ENCODE measurements at regions of chr11 and their contacts with region 1.

Region 1: GRCh38 chr11:35214792-35215193 is 75.8 kb downstream of the CD44 start:
- DNase-seq: no peak
- ATAC-seq: peak; percentile 71
- H3K4me3 ChIP-seq: no peak overlapping the region
- H3K4me3 Mint-ChIP-seq: peak overlapping the region in 7 of 10 donors; percentile 12 to 68 (median 44)
- H3K27ac ChIP-seq: peak overlapping the region; percentile 11
- H3K27ac Mint-ChIP-seq: peak overlapping the region; percentile 26 to 98 (median 92)
- H3K4me1 ChIP-seq: peaks cover 40 to 41% of the 10 kb centered on the region in 2 donors
- H3K4me1 Mint-ChIP-seq: peaks cover 41 to 97% (median 89%) of the 10 kb centered on the region in 7 donors
- H3K27me3 ChIP-seq: no peaks in the 10 kb centered on the region
- H3K27me3 Mint-ChIP-seq: no peaks in the 10 kb centered on the region

Region 2: DNA sequence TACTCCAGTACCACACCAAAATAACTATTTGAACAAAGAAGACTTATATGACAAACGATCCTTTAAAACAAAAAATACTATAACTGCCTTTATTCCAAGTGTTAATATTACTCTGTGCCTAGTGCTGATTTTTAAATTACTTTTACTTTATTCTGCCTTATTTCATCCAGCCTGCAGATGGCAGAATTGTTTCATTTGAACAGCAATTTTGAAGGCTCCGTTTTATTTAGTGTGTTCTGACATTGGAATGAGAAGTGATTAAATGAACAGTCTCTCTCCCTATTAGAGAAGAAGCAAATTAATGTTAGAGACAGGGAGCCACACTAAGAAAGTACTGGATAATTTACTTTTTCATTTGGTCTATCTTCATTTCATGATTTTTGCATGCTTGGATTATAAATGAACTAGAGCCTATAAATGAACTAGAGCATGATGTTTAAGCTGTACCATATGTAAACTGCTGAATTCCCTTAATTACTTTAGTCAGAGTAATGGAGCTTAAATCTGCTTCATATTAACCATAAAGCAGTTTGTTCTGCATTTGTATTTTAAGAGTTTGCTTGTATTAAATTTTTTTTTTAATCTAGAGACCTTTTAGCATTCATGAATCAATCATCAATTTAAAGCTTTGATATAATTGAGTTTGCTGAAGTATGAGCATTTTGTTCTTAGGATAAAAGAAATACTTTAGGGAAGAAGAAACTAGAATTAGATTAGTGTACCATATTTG is 288.5 kb before region 1 on chr11:
- CTCF ChIA-PET with region 1: no interaction called
- POLR2A ChIA-PET with region 1: no interaction called
- intact Hi-C with region 1: loop called in 1 of 2 experiments (anchors 5 kb)
- DNase-seq: peak in 7 of 9 donors; percentile 18 to 61 (median 58)
- ATAC-seq: peak; percentile 80
- H3K4me3 ChIP-seq: no peak overlapping the region
- H3K4me3 Mint-ChIP-seq: no peak overlapping the region
- H3K27ac ChIP-seq: no peak overlapping the region
- H3K27ac Mint-ChIP-seq: peak overlapping the region in 1 of 9 donors; percentile 49
- H3K4me1 ChIP-seq: peaks cover 0 to 10% of the 10 kb centered on the region in 2 donors
- H3K4me1 Mint-ChIP-seq: peaks cover 10 to 54% (median 29%) of the 10 kb centered on the region in 7 donors
- H3K27me3 ChIP-seq: no peaks in the 10 kb centered on the region
- H3K27me3 Mint-ChIP-seq: no peaks in the 10 kb centered on the region

Region 3: DNA sequence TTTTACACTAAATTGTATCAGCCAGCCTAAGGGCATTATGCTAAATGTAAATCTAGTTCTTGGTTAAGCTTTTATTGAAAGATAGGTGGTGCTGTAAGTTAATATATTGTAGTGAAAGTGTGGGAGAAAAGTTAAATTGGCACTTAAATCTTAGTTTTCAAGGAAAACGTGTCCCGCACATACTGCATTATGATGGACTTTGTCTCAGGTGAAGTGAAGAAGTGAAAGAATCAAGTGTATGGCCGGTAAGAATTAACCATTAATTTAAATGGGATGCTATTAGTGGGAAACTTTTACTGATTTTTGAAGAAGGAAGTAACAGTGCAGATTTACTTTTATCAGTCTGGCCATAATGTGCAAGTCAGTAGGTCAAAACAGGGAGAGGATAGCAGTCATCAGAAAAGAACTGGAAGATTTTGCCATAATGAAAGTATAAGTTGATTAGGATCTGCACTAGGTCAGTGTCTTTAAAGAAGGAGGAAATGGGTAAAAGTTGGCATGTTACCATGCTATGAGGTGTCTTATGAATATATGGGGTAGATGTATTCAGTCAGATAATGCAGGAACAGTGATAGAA is 216.8 kb before region 1 on chr11:
- CTCF ChIA-PET with region 1: no interaction called
- POLR2A ChIA-PET with region 1: interaction called, 3 read pairs
- intact Hi-C with region 1: loop called in 1 of 2 experiments (anchors 1 kb)
- DNase-seq: peak in 6 of 9 donors; percentile 27 to 54 (median 44)
- ATAC-seq: peak; percentile 72
- H3K4me3 ChIP-seq: no peak overlapping the region
- H3K4me3 Mint-ChIP-seq: peak overlapping the region in 9 of 10 donors; percentile 6 to 81 (median 34)
- H3K27ac ChIP-seq: peak overlapping the region; percentile 8
- H3K27ac Mint-ChIP-seq: peak overlapping the region; percentile 15 to 90 (median 69)
- H3K4me1 ChIP-seq: peaks cover 15 to 19% of the 10 kb centered on the region in 2 donors
- H3K4me1 Mint-ChIP-seq: peaks cover 19 to 38% (median 35%) of the 10 kb centered on the region in 7 donors
- H3K27me3 ChIP-seq: no peaks in the 10 kb centered on the region
- H3K27me3 Mint-ChIP-seq: no peaks in the 10 kb centered on the region

Region 4: DNA sequence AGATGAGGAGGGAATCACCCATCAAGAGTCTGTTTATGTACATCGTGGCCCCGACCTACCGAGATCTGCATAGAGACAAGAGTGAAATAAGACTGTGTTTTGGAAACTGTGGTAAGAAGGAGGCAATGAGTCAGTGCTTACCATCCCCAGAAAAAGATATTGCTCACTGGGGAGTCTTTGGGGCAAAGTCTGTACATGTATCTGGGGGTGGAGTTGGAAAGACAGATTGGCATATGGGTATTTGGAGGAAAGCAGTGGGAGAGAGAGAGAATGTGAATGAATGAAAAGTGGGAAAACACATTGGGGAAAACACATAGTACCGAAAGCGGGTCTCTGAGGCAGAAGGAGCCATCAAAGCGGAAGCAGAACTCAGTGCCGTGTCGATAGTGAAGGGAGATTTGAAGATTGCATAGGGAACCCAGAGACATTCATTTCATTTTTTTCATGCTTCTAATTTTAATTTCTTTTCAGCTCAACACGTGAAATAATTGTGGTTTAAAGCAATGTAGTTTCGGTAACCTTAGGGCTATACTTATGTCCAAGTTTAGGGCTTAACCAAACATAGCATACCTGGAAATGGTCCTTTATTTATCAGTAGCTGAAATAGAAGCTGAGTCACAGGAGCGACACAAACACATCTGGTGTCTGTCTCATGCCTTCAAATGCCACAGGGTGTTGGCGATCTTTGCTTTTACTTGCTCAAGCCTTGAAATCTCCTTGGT is 174.4 kb before region 1 on chr11:
- CTCF ChIA-PET with region 1: no interaction called
- POLR2A ChIA-PET with region 1: no interaction called
- intact Hi-C with region 1: loop called in 1 of 2 experiments (anchors 1 kb)
- DNase-seq: peak in 8 of 9 donors; percentile 53 to 89 (median 74)
- ATAC-seq: peak; percentile 88
- H3K4me3 ChIP-seq: peak overlapping the region; percentile 60
- H3K4me3 Mint-ChIP-seq: peak overlapping the region; percentile 74 to 94 (median 89)
- H3K27ac ChIP-seq: peak overlapping the region; percentile 86
- H3K27ac Mint-ChIP-seq: peak overlapping the region; percentile 90 to 99 (median 97)
- H3K4me1 ChIP-seq: peaks cover 29 to 45% of the 10 kb centered on the region in 2 donors
- H3K4me1 Mint-ChIP-seq: peaks cover 28 to 77% (median 68%) of the 10 kb centered on the region in 7 donors
- H3K27me3 ChIP-seq: no peaks in the 10 kb centered on the region
- H3K27me3 Mint-ChIP-seq: peaks cover 0 to 29% (median 0%) of the 10 kb centered on the region in 5 donors

Region 5: GRCh38 chr11:35144136-35144741 is 70.6 kb before region 1 on chr11:
- CTCF ChIA-PET with region 1: interaction called, 4 read pairs
- POLR2A ChIA-PET with region 1: interaction called, 4 read pairs
- intact Hi-C with region 1: loop called (anchors 2 to 5 kb)
- DNase-seq: peak in 8 of 9 donors; percentile 59 to 85 (median 74)
- ATAC-seq: peak; percentile 59
- H3K4me3 ChIP-seq: peak overlapping the region; percentile 97
- H3K4me3 Mint-ChIP-seq: peak overlapping the region; percentile 83 to 99 (median 94)
- H3K27ac ChIP-seq: peak overlapping the region; percentile 88
- H3K27ac Mint-ChIP-seq: peak overlapping the region; percentile 79 to 100 (median 92)
- H3K4me1 ChIP-seq: peaks cover 68 to 74% of the 10 kb centered on the region in 2 donors
- H3K4me1 Mint-ChIP-seq: peaks cover 62 to 83% (median 77%) of the 10 kb centered on the region in 7 donors
- H3K27me3 ChIP-seq: no peaks in the 10 kb centered on the region
- H3K27me3 Mint-ChIP-seq: no peaks in the 10 kb centered on the region

Region 6: GRCh38 chr11:35178873-35179272 is 35.9 kb before region 1 on chr11:
- CTCF ChIA-PET with region 1: interaction called, 6 read pairs
- POLR2A ChIA-PET with region 1: interaction called, 4 read pairs
- intact Hi-C with region 1: loop called in 1 of 2 experiments (anchors 1 kb)
- DNase-seq: no peak
- ATAC-seq: no peak
- H3K4me3 ChIP-seq: no peak overlapping the region
- H3K4me3 Mint-ChIP-seq: peak overlapping the region in 9 of 10 donors; percentile 44 to 77 (median 59)
- H3K27ac ChIP-seq: peak overlapping the region; percentile 65
- H3K27ac Mint-ChIP-seq: peak overlapping the region; percentile 85 to 100 (median 94)
- H3K4me1 ChIP-seq: peaks cover 84 to 89% of the 10 kb centered on the region in 2 donors
- H3K4me1 Mint-ChIP-seq: peaks cover 62 to 93% (median 91%) of the 10 kb centered on the region in 7 donors
- H3K27me3 ChIP-seq: no peaks in the 10 kb centered on the region
- H3K27me3 Mint-ChIP-seq: no peaks in the 10 kb centered on the region

Region 7: DNA sequence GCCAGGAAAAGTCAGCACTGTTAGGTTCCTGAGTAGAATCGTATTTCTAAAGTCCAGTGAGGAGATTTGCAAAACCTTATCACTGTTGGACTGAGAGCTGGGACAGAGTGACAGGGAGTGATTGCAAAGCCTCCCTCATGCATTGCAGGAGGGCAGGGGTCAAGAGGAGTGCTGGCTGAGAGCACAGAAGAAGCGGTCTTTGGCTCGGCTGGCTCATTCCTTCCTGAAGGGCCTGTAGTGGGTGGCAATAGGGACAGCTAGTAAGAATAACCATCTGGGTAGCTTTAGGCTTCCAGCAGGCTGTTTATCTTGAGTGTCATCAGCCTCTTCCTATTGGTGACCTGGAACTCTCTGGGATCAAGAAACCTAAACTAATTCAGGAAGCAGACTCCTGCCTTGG is 22.4 kb before region 1 on chr11:
- CTCF ChIA-PET with region 1: no interaction called
- POLR2A ChIA-PET with region 1: interaction called, 4 read pairs
- intact Hi-C with region 1: loop called in 1 of 2 experiments (anchors 2 kb)
- DNase-seq: no peak
- ATAC-seq: no peak
- H3K4me3 ChIP-seq: no peak overlapping the region
- H3K4me3 Mint-ChIP-seq: peak overlapping the region in 5 of 10 donors; percentile 8 to 61 (median 24)
- H3K27ac ChIP-seq: peak overlapping the region; percentile 0
- H3K27ac Mint-ChIP-seq: peak overlapping the region in 8 of 9 donors; percentile 55 to 89 (median 75)
- H3K4me1 ChIP-seq: peaks cover 12 to 51% of the 10 kb centered on the region in 2 donors
- H3K4me1 Mint-ChIP-seq: peaks cover 37 to 100% (median 97%) of the 10 kb centered on the region in 7 donors
- H3K27me3 ChIP-seq: no peaks in the 10 kb centered on the region
- H3K27me3 Mint-ChIP-seq: no peaks in the 10 kb centered on the region

Region 8: DNA sequence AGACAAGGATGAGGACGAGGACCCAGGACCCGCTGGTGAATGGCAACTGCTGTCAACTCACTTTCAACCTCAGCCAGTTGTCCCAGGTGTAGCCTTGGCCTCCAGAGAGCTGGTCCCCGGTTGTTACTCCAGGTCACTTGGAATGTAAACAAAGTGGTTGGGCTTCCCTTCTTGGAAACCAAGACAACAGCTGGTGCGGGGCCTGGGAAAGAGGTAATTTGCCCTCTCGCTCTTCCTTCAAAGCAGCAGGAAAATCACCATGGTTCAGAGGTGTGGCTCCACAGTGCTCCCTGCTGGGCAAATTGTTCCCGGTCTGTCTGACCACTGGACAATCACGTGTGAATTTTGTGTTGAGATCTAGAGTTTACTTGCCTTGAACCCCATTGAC is 189.6 kb after region 1 on chr11:
- CTCF ChIA-PET with region 1: no interaction called
- POLR2A ChIA-PET with region 1: no interaction called
- intact Hi-C with region 1: no loop called
- DNase-seq: peak in 1 of 9 donors; percentile 4
- ATAC-seq: peak; percentile 37
- H3K4me3 ChIP-seq: no peak overlapping the region
- H3K4me3 Mint-ChIP-seq: peak overlapping the region in 1 of 10 donors; percentile 7
- H3K27ac ChIP-seq: no peak overlapping the region
- H3K27ac Mint-ChIP-seq: no peak overlapping the region
- H3K4me1 ChIP-seq: no peaks in the 10 kb centered on the region
- H3K4me1 Mint-ChIP-seq: peaks cover 0 to 4% (median 0%) of the 10 kb centered on the region in 7 donors
- H3K27me3 ChIP-seq: no peaks in the 10 kb centered on the region
- H3K27me3 Mint-ChIP-seq: peaks cover 0 to 24% (median 5%) of the 10 kb centered on the region in 5 donors

Region 9: GRCh38 chr11:35464308-35464707 is 249.5 kb after region 1 on chr11:
- CTCF ChIA-PET with region 1: no interaction called
- POLR2A ChIA-PET with region 1: no interaction called
- intact Hi-C with region 1: no loop called
- DNase-seq: no peak
- ATAC-seq: no peak
- H3K4me3 ChIP-seq: no peak overlapping the region
- H3K4me3 Mint-ChIP-seq: no peak overlapping the region
- H3K27ac ChIP-seq: no peak overlapping the region
- H3K27ac Mint-ChIP-seq: no peak overlapping the region
- H3K4me1 ChIP-seq: no peaks in the 10 kb centered on the region
- H3K4me1 Mint-ChIP-seq: no peaks in the 10 kb centered on the region
- H3K27me3 ChIP-seq: no peaks in the 10 kb centered on the region
- H3K27me3 Mint-ChIP-seq: peaks cover 0 to 33% (median 25%) of the 10 kb centered on the region in 5 donors

Region 10: DNA sequence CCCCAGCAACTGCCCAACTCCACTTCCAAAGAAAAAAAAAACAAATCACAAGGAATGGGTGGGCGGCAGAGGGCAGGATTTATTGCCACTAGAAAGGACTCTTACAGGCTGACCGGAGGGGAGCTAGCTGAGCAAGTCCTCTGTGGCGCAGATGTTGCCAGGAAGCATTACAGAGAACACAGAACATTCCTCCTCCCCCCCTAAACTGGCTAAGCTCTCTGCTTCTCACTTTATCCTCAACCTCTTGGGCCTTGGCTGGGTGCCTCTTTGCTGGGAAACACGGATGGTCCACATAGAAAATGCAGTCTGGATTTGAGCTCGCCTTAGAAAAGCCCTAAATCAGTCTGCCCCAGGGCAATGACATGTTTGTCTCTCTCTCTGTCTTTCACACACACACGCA is 390.9 kb after region 1 on chr11:
- CTCF ChIA-PET with region 1: no interaction called
- POLR2A ChIA-PET with region 1: no interaction called
- intact Hi-C with region 1: no loop called
- DNase-seq: no peak
- ATAC-seq: no peak
- H3K4me3 ChIP-seq: no peak overlapping the region
- H3K4me3 Mint-ChIP-seq: no peak overlapping the region
- H3K27ac ChIP-seq: no peak overlapping the region
- H3K27ac Mint-ChIP-seq: no peak overlapping the region
- H3K4me1 ChIP-seq: no peaks in the 10 kb centered on the region
- H3K4me1 Mint-ChIP-seq: no peaks in the 10 kb centered on the region
- H3K27me3 ChIP-seq: no peaks in the 10 kb centered on the region
- H3K27me3 Mint-ChIP-seq: peaks cover 15 to 70% (median 46%) of the 10 kb centered on the region in 5 donors

Measured in naive thymus-derived CD4-positive, alpha-beta T cell (primary cell).